Naive thymus-derived CD4-positive, alpha-beta T cell (primary cell): ENCODE measurements at regions of chr15 and their contacts with region 1.

Region 1: DNA sequence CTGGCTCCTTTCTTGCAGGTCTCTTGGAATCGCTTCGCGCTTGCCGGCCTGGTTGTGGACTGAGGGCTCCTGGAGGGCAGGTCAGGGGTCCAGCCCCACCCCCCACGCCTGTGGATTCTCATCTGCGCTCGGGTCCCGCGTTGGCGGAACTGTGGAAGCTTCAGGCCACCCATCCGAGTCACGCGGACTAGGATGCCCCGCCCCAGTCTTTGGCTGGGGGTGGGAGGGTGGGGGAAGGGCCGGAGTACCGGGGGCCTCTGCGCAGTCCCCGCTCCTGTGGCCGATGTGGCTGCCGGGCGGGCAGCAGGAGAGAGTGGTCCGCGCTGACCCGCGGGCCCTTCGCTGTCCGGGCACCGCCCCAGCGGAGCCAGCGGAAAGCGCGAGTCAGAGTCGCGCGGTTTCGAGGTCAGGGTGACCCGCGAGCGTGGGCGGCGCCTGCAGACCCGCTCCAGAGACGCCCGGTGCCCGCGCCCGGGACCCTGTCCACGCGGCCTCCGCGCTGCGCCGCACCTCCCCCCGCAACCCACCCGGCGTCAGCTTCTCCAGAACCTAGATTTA is 114.2 kb downstream of the KLF13 start:
- DNase-seq: peak in 3 of 9 donors; percentile 31 to 74 (median 42)
- ATAC-seq: peak; percentile 63
- H3K4me3 ChIP-seq: peak overlapping the region; percentile 43
- H3K4me3 Mint-ChIP-seq: peak overlapping the region; percentile 65 to 87 (median 77)
- H3K27ac ChIP-seq: peak overlapping the region; percentile 64
- H3K27ac Mint-ChIP-seq: peak overlapping the region; percentile 51 to 100 (median 84)
- H3K4me1 ChIP-seq: peaks cover 32 to 50% of the 10 kb centered on the region in 2 donors
- H3K4me1 Mint-ChIP-seq: peaks cover 22 to 71% (median 58%) of the 10 kb centered on the region in 7 donors
- H3K27me3 ChIP-seq: no peaks in the 10 kb centered on the region
- H3K27me3 Mint-ChIP-seq: no peaks in the 10 kb centered on the region

Region 2: GRCh38 chr15:31458591-31459399 is 18.0 kb after region 1 on chr15:
- CTCF ChIA-PET with region 1: interaction called, 4 read pairs
- POLR2A ChIA-PET with region 1: interaction called, 17 read pairs
- intact Hi-C with region 1: loop called in 1 of 2 experiments (anchors 2 kb)
- DNase-seq: peak in 3 of 9 donors; percentile 19 to 64 (median 32)
- ATAC-seq: peak; percentile 83
- H3K4me3 ChIP-seq: no peak overlapping the region
- H3K4me3 Mint-ChIP-seq: peak overlapping the region in 4 of 10 donors; percentile 0 to 72 (median 4)
- H3K27ac ChIP-seq: no peak overlapping the region
- H3K27ac Mint-ChIP-seq: peak overlapping the region in 7 of 9 donors; percentile 4 to 82 (median 70)
- H3K4me1 ChIP-seq: peaks cover 0 to 8% of the 10 kb centered on the region in 2 donors
- H3K4me1 Mint-ChIP-seq: peaks cover 5 to 33% (median 28%) of the 10 kb centered on the region in 7 donors
- H3K27me3 ChIP-seq: no peaks in the 10 kb centered on the region
- H3K27me3 Mint-ChIP-seq: no peaks in the 10 kb centered on the region

Region 3: GRCh38 chr15:31733424-31733823 is 292.6 kb after region 1 on chr15:
- CTCF ChIA-PET with region 1: no interaction called
- POLR2A ChIA-PET with region 1: no interaction called
- intact Hi-C with region 1: no loop called
- DNase-seq: no peak
- ATAC-seq: no peak
- H3K4me3 ChIP-seq: no peak overlapping the region
- H3K4me3 Mint-ChIP-seq: no peak overlapping the region
- H3K27ac ChIP-seq: no peak overlapping the region
- H3K27ac Mint-ChIP-seq: no peak overlapping the region
- H3K4me1 ChIP-seq: no peaks in the 10 kb centered on the region
- H3K4me1 Mint-ChIP-seq: no peaks in the 10 kb centered on the region
- H3K27me3 ChIP-seq: no peaks in the 10 kb centered on the region
- H3K27me3 Mint-ChIP-seq: peaks cover 6 to 72% (median 56%) of the 10 kb centered on the region in 5 donors